Calu3 (cell line): ENCODE measurements at regions of chr3 and their contacts with region 1.

Region 1: GRCh38 chr3:64405211-64405835 is 180.1 kb upstream of the PRICKLE2 start:
- DNase-seq: no peak
- H3K4me3 Mint-ChIP-seq: no peak overlapping the region
- H3K27ac Mint-ChIP-seq: no peak overlapping the region
- H3K4me1 Mint-ChIP-seq: no peaks in the 10 kb centered on the region
- H3K27me3 Mint-ChIP-seq: peaks cover 12% of the 10 kb centered on the region
- CTCF ChIP-seq: no peak

Region 2: DNA sequence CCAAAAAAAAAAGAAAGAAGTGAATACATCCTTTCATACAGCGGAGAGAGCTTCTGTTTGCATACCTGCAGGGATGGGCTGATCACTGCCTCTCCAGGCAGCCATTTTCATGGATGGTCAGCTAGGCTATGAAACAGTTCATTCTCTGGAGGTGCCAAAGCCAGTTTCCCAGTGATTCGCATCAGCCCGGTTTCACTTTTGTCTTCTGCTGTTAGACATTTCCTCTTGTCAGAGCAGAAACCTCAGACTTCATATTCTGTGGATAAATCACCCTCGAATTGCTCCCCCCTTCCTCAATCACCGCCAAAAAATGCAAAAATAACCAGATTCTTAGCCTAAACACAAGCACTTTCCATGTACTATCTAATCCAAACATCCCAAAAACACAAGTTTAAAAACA is 56.9 kb after region 1 on chr3:
- CTCF ChIA-PET with region 1: no interaction called
- intact Hi-C with region 1: loop called (anchors 10 kb)
- DNase-seq: no peak
- H3K4me3 Mint-ChIP-seq: no peak overlapping the region
- H3K27ac Mint-ChIP-seq: no peak overlapping the region
- H3K4me1 Mint-ChIP-seq: no peaks in the 10 kb centered on the region
- H3K27me3 Mint-ChIP-seq: peaks cover 53% of the 10 kb centered on the region
- CTCF ChIP-seq: no peak

Region 3: DNA sequence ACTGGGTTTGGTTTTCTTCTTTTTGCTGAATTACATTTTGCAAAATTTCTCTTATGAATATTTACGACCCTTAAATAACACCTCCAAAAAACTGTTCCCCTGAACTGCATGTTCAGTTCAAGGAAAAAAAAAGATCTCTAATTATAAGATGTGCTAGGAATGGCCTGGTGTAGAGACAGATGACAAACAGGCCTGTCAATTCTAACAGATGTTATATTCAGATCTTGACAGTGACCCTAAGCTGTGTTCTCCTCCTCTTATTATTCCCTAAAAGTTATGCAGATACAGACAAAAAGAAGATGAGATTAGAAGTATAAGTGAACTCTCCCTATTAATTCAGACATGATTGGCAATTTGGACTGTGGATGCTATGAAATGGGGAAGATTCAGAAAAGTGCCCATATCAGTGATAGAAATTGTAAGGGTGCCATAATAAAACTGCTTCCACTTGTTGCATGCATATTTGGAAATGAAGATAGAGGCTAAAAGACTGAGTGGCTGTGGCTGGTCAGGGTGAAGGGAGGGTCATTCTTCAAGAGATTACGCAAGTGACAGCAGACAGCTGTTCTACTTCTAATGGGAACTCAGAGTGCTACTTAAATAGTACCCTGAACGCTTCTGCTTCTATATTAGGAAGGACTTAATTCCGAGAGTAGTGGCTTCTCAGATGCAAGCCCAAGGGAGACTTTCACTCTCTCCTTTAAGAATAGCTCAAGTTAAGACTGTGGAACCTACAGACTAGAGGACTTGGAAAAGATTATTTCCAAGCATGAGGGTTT is 206.9 kb after region 1 on chr3:
- CTCF ChIA-PET with region 1: no interaction called
- intact Hi-C with region 1: no loop called
- DNase-seq: no peak
- H3K4me3 Mint-ChIP-seq: no peak overlapping the region
- H3K27ac Mint-ChIP-seq: peak overlapping the region; percentile 63
- H3K4me1 Mint-ChIP-seq: peaks cover 37% of the 10 kb centered on the region
- H3K27me3 Mint-ChIP-seq: no peaks in the 10 kb centered on the region
- CTCF ChIP-seq: no peak